Calu3 (cell line): ENCODE measurements at regions of chr14 and their contacts with region 1.

Region 1: DNA sequence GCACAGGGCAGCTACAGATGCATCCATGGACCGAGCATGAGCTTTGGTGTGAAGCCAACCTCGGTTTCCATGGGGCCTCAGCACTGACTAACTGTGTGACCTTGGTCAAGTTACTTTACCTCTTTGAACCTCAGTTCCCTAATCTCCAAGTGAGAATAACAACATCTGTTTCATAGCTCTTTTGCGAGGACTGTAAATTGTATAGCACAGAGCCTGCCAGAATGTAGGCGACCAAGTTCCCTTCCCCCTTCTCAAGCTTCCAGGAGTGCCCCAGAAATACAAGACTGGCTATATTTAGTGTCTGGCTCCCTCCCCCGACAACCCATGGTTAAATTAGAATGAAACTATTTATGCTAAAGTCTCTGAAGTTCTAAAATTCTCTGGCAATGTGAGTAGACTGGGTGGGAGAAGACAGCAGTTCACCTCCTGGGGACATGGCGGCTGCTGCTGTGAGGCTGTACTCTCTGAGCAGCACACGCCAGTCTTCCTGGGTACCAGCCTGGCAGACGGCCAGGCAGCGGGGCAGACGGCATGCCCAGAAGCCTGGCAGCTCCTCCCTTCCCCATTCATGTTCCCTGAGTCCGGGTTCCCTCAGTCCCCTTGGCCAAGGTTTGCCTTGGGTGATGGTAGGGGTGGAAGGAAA is 22.0 kb upstream of the TMED10 start:
- DNase-seq: no peak
- H3K4me3 Mint-ChIP-seq: no peak overlapping the region
- H3K27ac Mint-ChIP-seq: peak overlapping the region; percentile 28
- H3K4me1 Mint-ChIP-seq: peaks cover 59% of the 10 kb centered on the region
- H3K27me3 Mint-ChIP-seq: no peaks in the 10 kb centered on the region
- CTCF ChIP-seq: no peak

Region 2: DNA sequence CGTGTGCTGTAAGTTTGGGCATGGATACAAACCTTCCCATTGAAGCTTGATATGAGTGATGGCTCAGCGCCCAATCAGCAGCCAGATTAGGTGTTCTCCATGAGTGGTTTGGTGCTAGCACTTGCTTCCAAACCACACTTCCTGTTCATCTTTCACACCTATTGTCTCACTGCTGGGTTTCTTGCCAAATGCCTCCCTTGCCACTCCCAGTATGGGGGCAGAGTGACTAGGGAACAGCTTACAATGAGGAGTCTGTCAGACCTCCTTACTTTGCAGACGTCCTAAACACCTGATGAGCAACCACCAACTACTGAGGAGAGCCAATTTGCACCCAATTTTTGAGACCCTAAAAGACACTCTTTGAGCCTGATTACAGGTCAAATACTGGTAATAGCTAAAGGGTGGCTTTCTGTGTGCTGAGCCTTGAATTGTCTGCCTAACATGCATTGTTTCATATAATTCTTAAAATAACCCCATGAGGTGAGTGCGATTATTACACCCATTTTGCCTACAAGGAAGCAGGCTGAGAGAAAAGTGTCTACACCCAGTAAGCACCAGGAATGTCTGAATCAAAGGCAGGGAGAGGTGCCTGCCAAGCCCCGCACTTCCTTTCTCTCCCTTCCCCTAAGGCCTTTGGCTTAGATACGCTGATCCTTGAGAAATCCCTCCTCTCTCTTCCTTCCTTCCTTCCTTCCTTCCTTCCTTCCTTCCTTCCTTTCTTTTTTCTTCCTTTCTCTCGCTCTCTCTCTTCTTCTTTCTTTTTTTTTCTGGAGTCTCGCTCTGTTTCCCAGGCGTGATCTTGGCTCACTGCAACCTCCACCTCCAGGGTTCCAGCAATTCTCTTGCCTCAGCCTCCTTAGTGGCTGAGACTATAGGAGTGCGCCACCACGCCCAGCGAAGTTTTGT is 32.0 kb after region 1 on chr14:
- CTCF ChIA-PET with region 1: interaction called, 4 read pairs
- intact Hi-C with region 1: loop called (anchors 2 kb)
- DNase-seq: peak; percentile 68
- H3K4me3 Mint-ChIP-seq: no peak overlapping the region
- H3K27ac Mint-ChIP-seq: peak overlapping the region; percentile 96
- H3K4me1 Mint-ChIP-seq: peaks cover 65% of the 10 kb centered on the region
- H3K27me3 Mint-ChIP-seq: no peaks in the 10 kb centered on the region
- CTCF ChIP-seq: peak; percentile 33

Region 3: GRCh38 chr14:75238756-75239455 is 40.5 kb after region 1 on chr14:
- CTCF ChIA-PET with region 1: interaction called, 9 read pairs
- intact Hi-C with region 1: loop called (anchors 1 kb)
- DNase-seq: peak; percentile 52
- H3K4me3 Mint-ChIP-seq: peak overlapping the region; percentile 31
- H3K27ac Mint-ChIP-seq: peak overlapping the region; percentile 70
- H3K4me1 Mint-ChIP-seq: peaks cover 46% of the 10 kb centered on the region
- H3K27me3 Mint-ChIP-seq: no peaks in the 10 kb centered on the region
- CTCF ChIP-seq: peak; percentile 39